B cell (primary cell): ENCODE measurements at regions of chr1 and their contacts with region 1.

Region 1: DNA sequence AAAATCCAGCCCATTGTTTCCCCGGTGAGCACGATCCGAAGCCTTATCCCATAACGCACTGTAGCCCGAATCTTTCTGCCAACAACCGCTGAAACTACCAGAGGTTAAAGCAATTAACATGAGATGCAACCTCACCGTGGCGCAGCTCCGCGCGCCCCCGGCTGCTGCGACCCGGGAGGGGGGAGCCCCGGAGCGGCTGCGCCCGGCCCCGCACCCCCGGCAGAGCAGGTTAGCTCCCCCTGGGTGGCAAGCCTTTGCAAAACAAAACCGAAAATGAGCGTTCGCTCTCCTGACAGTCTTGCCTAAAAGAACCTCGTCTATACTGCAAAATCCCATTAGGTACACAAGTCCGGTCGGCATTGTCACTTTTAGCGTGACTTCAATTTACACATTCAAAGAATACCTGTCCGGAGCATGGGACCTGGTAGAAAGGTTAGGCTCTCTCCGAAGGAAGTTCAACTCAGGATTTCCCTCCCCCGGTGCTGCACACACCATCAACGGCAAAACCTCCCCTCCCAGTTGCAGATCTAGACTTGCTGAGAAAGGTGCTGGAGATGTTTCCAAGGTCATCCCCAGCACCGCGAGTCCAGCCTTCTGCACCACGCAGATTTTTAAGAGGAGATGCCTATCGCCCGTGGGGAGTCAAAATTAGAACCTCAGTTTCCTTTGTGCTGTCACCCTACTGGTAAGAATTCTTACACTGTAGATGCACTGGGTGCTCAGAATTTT is 107.5 kb downstream of the ZNF281 start:
- DNase-seq: peak; percentile 82
- ATAC-seq: peak; percentile 79
- H3K4me3 ChIP-seq: peak overlapping the region; percentile 60 to 96 (median 88)
- H3K4me3 Mint-ChIP-seq: peak overlapping the region; percentile 93
- H3K27ac ChIP-seq: peak overlapping the region; percentile 60 to 61
- H3K27ac Mint-ChIP-seq: peak overlapping the region; percentile 89
- H3K4me1 ChIP-seq: peaks cover 44 to 47% of the 10 kb centered on the region in 2 donors
- H3K4me1 Mint-ChIP-seq: peaks cover 40% of the 10 kb centered on the region
- H3K27me3 ChIP-seq: no peaks in the 10 kb centered on the region
- H3K27me3 Mint-ChIP-seq: no peaks in the 10 kb centered on the region
- CTCF ChIP-seq: peak; percentile 35

Region 2: DNA sequence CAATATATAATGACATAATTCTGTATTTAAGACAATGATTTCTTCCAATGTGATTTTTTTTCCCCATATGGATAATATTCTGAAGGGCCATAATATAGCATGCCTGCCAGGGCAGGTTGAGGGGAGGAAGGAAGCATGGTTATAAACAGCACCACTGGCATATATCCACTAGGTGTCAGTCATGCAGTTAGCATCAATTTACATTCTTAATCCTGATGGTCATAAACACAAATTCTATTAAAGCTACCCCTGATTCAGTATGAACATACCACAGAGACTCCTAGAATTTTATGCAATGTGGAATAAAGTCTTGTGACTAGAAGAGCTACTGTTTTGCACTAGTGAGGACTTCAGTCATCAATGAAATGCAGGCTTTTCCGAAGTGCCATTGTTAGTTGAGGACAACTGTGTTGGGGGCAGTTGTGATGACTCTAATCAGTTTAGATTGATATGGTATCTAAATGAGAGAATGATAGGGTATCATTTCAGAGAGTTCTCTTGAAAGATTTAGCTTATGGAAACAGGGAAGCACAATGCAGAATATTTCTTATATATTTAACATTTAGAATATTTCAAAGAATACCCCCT is 617.6 kb before region 1 on chr1:
- CTCF ChIA-PET with region 1: interaction called, 11 read pairs
- POLR2A ChIA-PET with region 1: no interaction called
- intact Hi-C with region 1: loop called (anchors 2 kb)
- DNase-seq: peak; percentile 69
- ATAC-seq: peak; percentile 73
- H3K4me3 ChIP-seq: no peak overlapping the region
- H3K4me3 Mint-ChIP-seq: no peak overlapping the region
- H3K27ac ChIP-seq: no peak overlapping the region
- H3K27ac Mint-ChIP-seq: no peak overlapping the region
- H3K4me1 ChIP-seq: no peaks in the 10 kb centered on the region
- H3K4me1 Mint-ChIP-seq: no peaks in the 10 kb centered on the region
- H3K27me3 ChIP-seq: peaks cover 0 to 7% (median 6%) of the 10 kb centered on the region in 4 experiments
- H3K27me3 Mint-ChIP-seq: peaks cover 24% of the 10 kb centered on the region
- CTCF ChIP-seq: peak; percentile 92

Region 3: GRCh38 chr1:200139661-200140250 is 162.6 kb before region 1 on chr1:
- CTCF ChIA-PET with region 1: interaction called, 16 read pairs
- POLR2A ChIA-PET with region 1: no interaction called
- intact Hi-C with region 1: loop called (anchors 1 kb)
- DNase-seq: peak; percentile 71
- ATAC-seq: peak; percentile 86
- H3K4me3 ChIP-seq: no peak overlapping the region
- H3K4me3 Mint-ChIP-seq: no peak overlapping the region
- H3K27ac ChIP-seq: no peak overlapping the region
- H3K27ac Mint-ChIP-seq: no peak overlapping the region
- H3K4me1 ChIP-seq: no peaks in the 10 kb centered on the region
- H3K4me1 Mint-ChIP-seq: peaks cover 2% of the 10 kb centered on the region
- H3K27me3 ChIP-seq: no peaks in the 10 kb centered on the region
- H3K27me3 Mint-ChIP-seq: no peaks in the 10 kb centered on the region
- CTCF ChIP-seq: peak; percentile 86

Region 4: GRCh38 chr1:200258447-200259375 is 43.6 kb before region 1 on chr1:
- CTCF ChIA-PET with region 1: interaction called, 8 read pairs
- POLR2A ChIA-PET with region 1: no interaction called
- intact Hi-C with region 1: loop called (anchors 1 kb)
- DNase-seq: peak; percentile 60
- ATAC-seq: peak; percentile 79
- H3K4me3 ChIP-seq: no peak overlapping the region
- H3K4me3 Mint-ChIP-seq: no peak overlapping the region
- H3K27ac ChIP-seq: no peak overlapping the region
- H3K27ac Mint-ChIP-seq: no peak overlapping the region
- H3K4me1 ChIP-seq: no peaks in the 10 kb centered on the region
- H3K4me1 Mint-ChIP-seq: peaks cover 6% of the 10 kb centered on the region
- H3K27me3 ChIP-seq: no peaks in the 10 kb centered on the region
- H3K27me3 Mint-ChIP-seq: no peaks in the 10 kb centered on the region
- CTCF ChIP-seq: peak; percentile 76

Region 5: DNA sequence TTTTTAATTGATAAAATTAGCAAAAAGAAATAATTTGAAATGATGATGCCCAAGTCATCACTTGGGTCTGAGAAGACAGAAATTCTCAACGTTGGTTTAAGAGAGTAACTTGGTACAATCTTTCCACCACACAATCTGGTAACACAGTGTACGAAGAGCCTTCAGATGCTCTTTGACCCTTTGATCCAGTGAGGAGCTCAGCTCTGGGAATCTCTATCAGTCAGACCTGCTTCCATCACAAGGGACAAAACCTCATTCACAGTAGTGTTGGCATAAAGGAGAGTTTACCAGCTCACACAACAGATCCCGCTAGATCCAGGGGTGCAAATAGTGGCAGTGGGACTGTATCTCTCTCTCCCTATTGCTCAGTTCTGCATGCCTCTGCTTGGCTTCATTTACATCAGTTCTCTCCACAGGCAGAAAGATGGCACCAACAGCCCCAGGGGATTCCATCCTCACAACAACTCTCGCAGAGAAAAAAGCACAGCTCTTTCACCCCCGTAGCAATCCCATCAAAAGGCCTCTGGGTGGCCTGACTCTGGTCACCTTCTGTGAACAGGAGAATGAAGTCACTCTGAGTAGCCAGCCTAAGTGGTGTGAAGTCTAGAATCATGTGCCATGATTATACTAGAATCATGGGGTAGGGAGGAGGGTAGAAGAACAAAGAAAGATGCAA is 12.2 kb before region 1 on chr1:
- CTCF ChIA-PET with region 1: interaction called, 9 read pairs
- POLR2A ChIA-PET with region 1: no interaction called
- intact Hi-C with region 1: loop called (anchors 2 kb)
- DNase-seq: no peak
- ATAC-seq: no peak
- H3K4me3 ChIP-seq: no peak overlapping the region
- H3K4me3 Mint-ChIP-seq: no peak overlapping the region
- H3K27ac ChIP-seq: no peak overlapping the region
- H3K27ac Mint-ChIP-seq: peak overlapping the region; percentile 42
- H3K4me1 ChIP-seq: peaks cover 21 to 22% of the 10 kb centered on the region in 2 donors
- H3K4me1 Mint-ChIP-seq: peaks cover 31% of the 10 kb centered on the region
- H3K27me3 ChIP-seq: no peaks in the 10 kb centered on the region
- H3K27me3 Mint-ChIP-seq: no peaks in the 10 kb centered on the region
- CTCF ChIP-seq: no peak

Region 6: DNA sequence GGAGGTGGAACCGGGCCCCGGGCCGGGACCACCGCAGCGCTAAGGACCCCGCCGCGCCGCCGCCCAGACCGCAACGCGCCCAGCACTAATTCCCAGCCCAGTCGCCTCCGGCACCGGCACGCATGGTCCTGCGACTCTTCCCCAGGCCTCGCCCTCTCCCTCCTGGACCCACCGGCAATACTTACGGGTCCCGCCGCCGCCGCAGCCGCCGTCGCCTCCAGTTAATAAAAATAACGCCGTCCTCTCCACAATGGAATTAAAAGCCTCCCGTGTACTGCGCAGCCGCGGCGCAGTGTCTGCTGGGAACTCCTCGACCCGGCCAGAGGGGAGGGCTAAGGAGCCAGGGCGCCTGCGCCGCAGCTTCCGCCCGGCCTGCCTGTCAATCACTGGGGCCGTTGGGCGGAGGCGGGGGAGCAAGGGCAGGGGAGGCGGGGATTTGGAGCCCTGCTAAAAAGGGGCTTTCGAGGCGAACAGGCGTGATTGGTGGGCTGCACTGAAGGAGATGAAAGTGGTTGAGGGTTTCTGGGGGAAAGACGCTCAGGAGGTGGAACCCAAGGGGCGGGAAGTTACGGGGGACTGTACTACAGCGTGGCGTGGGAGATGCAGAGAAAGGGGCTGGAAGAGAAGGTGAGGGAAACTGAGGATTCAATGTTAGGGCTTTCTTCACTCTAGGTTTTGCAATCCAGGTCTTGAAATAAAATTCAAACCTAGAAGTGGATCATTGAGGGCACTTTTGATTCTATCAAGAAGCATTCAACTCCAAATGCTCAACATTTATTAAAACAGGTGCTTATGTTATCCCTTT is 107.6 kb after region 1 on chr1 and contains the start of gene ZNF281:
- CTCF ChIA-PET with region 1: interaction called, 3 read pairs
- POLR2A ChIA-PET with region 1: interaction called, 3 read pairs
- intact Hi-C with region 1: loop called (anchors 2 kb)
- DNase-seq: peak; percentile 94
- ATAC-seq: peak; percentile 96
- H3K4me3 ChIP-seq: peak within 1 kb of the TSS; percentile 85 to 97 (median 91)
- H3K4me3 Mint-ChIP-seq: peak within 1 kb of the TSS; percentile 98
- H3K27ac ChIP-seq: peak within 1 kb of the TSS; percentile 64 to 88
- H3K27ac Mint-ChIP-seq: peak within 1 kb of the TSS; percentile 99
- H3K4me1 ChIP-seq: peaks cover 37 to 39% of the 10 kb centered on the region in 2 donors
- H3K4me1 Mint-ChIP-seq: peaks cover 47% of the 10 kb centered on the region
- H3K27me3 ChIP-seq: no peaks in the 10 kb centered on the region
- H3K27me3 Mint-ChIP-seq: no peaks in the 10 kb centered on the region
- CTCF ChIP-seq: no peak
- total RNA-seq, gene ZNF281: 23.3 and 23.5 TPM in 2 replicates